Left ventricle myocardium inferior (tissue), 1 donor: ENCODE measurements at regions of chrX and their contacts with region 1.

Region 1: GRCh38 chrX:20527558-20528011 is 260.9 kb upstream of the RPS6KA3 start:
- DNase-seq: peak; percentile 24
- H3K4me3 ChIP-seq: no peak overlapping the region
- H3K27ac ChIP-seq: no peak overlapping the region
- H3K4me1 ChIP-seq: peaks cover 10% of the 10 kb centered on the region
- H3K27me3 ChIP-seq: no peaks in the 10 kb centered on the region
- CTCF ChIP-seq: peak; percentile 60

Region 2: DNA sequence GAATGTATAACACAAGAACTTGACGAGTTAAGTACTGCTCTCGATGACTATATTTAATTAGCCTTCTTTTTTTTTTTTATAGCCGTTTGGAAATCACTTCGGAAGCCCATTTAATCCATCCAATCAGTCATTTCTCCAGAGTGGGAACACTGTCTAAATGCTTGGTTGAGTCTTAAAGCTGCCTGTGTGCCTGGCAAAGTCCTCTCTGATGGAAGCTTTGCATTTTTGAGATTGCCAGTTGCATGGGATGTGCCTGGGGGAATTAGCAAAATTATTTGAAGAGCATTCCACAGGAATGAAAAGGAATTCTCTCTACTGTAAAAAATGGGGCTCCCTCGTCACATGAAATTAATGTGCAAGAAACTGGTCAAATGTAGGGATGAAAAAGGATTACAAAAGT is 137.9 kb after region 1 on chrX:
- intact Hi-C with region 1: no loop called
- DNase-seq: no peak
- H3K4me3 ChIP-seq: no peak overlapping the region
- H3K27ac ChIP-seq: no peak overlapping the region
- H3K4me1 ChIP-seq: no peaks in the 10 kb centered on the region
- H3K27me3 ChIP-seq: no peaks in the 10 kb centered on the region
- CTCF ChIP-seq: no peak

Region 3: DNA sequence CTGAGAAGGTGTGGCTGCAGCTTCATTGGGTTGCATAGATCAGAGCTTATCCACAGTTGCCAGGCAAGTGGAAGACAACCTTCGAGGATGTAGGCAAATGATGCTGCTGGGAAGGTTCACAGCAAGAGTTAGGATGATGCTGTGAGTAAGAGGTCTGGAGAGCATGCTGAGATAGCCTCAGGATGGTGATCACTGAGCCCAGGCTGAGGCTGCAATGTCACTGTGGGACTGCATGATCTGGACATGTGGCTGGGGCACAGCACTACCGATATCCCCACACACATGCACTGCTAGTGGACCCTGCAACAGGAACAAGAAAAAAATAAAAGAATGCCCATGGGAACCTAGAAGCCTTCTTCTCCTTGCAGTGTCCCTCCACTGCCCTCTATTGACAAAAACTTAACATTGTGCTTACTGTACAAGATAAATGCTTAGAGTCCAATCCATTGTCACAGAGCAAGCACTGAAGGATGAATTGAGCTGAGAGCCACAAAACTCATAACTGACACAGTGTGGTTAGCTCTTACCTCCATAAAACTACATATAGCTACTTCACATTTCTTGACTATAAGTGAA is 952.2 kb after region 1 on chrX:
- intact Hi-C with region 1: loop called (anchors 10 kb)
- DNase-seq: no peak
- H3K4me3 ChIP-seq: no peak overlapping the region
- H3K27ac ChIP-seq: no peak overlapping the region
- H3K4me1 ChIP-seq: no peaks in the 10 kb centered on the region
- H3K27me3 ChIP-seq: no peaks in the 10 kb centered on the region
- CTCF ChIP-seq: peak; percentile 66

Region 4: GRCh38 chrX:21745756-21746155 is 1218.2 kb after region 1 on chrX:
- intact Hi-C with region 1: loop called (anchors 10 kb)
- DNase-seq: no peak
- H3K4me3 ChIP-seq: no peak overlapping the region
- H3K27ac ChIP-seq: no peak overlapping the region
- H3K4me1 ChIP-seq: peaks cover 50% of the 10 kb centered on the region
- H3K27me3 ChIP-seq: no peaks in the 10 kb centered on the region
- CTCF ChIP-seq: peak; percentile 59